K562 (cell line): ENCODE measurements at regions of chr12 and their contacts with region 1.

Region 1: GRCh38 chr12:25386831-25387731 is 136.4 kb upstream of the KRAS start:
- DNase-seq: peak; percentile 50 to 86 (median 54)
- ATAC-seq: peak; percentile 63
- H3K4me3 ChIP-seq: peak overlapping the region; percentile 53
- H3K27ac ChIP-seq: peak overlapping the region; percentile 60
- H3K4me1 ChIP-seq: peaks cover 10 to 20% of the 10 kb centered on the region in 2 experiments; a peak in 4 of 5 replicates
- H3K27me3 ChIP-seq: peaks cover 2 to 4% of the 10 kb centered on the region in 2 experiments; a peak in 2 of 5 replicates
- CTCF ChIP-seq: peak; percentile 73 to 90 (median 83)
- EP300 ChIP-seq: peak; percentile 8; the same call in 1 of the 2 replicates
- POLR2A ChIP-seq: no peak
- RAD21 ChIP-seq: peak; percentile 91 to 94

Region 2: DNA sequence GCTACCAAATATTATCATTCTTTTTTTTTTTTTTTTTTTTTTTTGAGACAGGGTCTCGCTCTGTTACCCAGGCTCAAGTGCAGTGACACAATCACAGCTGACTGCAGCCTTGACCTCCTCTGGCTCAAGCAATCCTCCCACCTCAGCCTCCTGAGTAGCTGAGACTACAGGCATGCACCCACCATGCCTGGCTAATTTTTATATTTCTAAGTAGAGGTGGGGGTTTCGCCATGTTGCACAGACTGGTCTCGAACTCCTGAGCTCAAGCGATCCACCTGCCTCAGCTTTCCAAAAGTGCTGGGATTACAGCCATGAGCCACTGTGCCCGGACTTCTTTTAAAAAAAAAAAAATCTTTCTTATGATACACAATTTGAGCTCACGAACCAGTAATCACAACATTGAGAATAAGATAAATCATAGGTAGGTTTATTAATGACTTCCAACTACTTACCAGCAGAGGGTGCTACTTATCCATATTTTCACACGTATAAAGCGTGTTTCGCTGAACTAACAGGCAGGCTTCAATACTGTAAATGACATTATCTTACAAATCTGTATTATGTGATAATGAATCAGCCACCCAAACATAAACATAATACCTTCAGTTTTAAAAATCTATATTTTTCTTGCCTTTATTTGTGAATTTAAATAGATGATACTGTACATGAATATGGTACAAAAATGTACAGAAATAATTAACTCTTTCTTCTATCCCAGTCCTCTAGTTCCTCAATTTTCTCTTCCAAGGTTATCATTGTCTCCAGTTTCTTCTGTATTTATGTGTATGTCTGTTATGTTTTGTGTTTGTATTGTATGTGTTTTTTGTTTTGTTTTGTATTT is 395.7 kb before region 1 on chr12:
- CTCF ChIA-PET with region 1: interaction called, 3 read pairs
- POLR2A ChIA-PET with region 1: no interaction called
- in situ Hi-C with region 1: no loop called
- intact Hi-C with region 1: loop called (anchors 1 kb)
- DNase-seq: peak; percentile 25 to 66 (median 39)
- ATAC-seq: peak; percentile 84
- H3K4me3 ChIP-seq: no peak overlapping the region
- H3K27ac ChIP-seq: no peak overlapping the region
- H3K4me1 ChIP-seq: no peaks in the 10 kb centered on the region
- H3K27me3 ChIP-seq: peaks cover 0 to 7% of the 10 kb centered on the region in 2 experiments; a peak in 2 of 5 replicates
- CTCF ChIP-seq: peak; percentile 47 to 78 (median 51); a peak in 5 of 6 replicates
- EP300 ChIP-seq: no peak
- POLR2A ChIP-seq: no peak
- RAD21 ChIP-seq: peak; percentile 94 to 97

Region 3: GRCh38 chr12:25208554-25208953 is 178.5 kb before region 1 on chr12:
- CTCF ChIA-PET with region 1: interaction called, 12 read pairs
- POLR2A ChIA-PET with region 1: no interaction called
- in situ Hi-C with region 1: no loop called
- intact Hi-C with region 1: no loop called
- DNase-seq: no peak
- ATAC-seq: no peak
- H3K4me3 ChIP-seq: no peak overlapping the region
- H3K27ac ChIP-seq: no peak overlapping the region
- H3K4me1 ChIP-seq: no peaks in the 10 kb centered on the region
- H3K27me3 ChIP-seq: no peaks in the 10 kb centered on the region
- CTCF ChIP-seq: no peak
- EP300 ChIP-seq: no peak
- POLR2A ChIP-seq: no peak
- RAD21 ChIP-seq: no peak

Region 4: DNA sequence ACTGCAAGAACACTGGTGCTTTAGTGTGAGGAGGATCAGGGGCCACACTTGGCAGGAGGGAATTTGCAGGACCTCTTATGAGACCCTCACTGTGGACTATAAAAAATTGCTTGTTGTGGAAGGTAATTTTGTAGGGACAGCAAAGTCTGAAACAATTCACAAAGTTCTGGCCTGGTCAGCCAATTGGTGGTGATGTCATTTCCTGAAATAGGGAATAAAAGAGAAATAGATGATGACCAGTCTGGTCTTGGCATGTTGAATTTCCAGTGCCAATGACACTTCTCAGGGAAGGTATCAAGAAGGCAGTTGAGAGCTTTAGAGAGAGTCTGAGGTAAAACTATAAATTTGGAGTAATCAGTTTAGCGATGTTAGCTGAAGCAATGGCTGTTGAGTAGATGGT is 295.3 kb after region 1 on chr12:
- CTCF ChIA-PET with region 1: no interaction called
- POLR2A ChIA-PET with region 1: no interaction called
- in situ Hi-C with region 1: no loop called
- intact Hi-C with region 1: no loop called
- DNase-seq: no peak
- ATAC-seq: no peak
- H3K4me3 ChIP-seq: no peak overlapping the region
- H3K27ac ChIP-seq: no peak overlapping the region
- H3K4me1 ChIP-seq: no peaks in the 10 kb centered on the region; a peak in 2 of 5 replicates
- H3K27me3 ChIP-seq: no peaks in the 10 kb centered on the region
- CTCF ChIP-seq: no peak
- EP300 ChIP-seq: no peak
- POLR2A ChIP-seq: no peak
- RAD21 ChIP-seq: no peak